ENCODE measurements at regions of chr2 and their contacts with region 1.

Region 1: GRCh38 chr2:135829378-135830135 is 7.4 kb downstream of the LCT start:
- DNase-seq: no peak
- H3K4me3 ChIP-seq: no peak overlapping the region
- H3K4me3 Mint-ChIP-seq: no peak overlapping the region
- H3K27ac Mint-ChIP-seq: no peak overlapping the region
- H3K4me1 ChIP-seq: peaks cover 39% of the 10 kb centered on the region
- H3K4me1 Mint-ChIP-seq: peaks cover 25% of the 10 kb centered on the region
- H3K27me3 ChIP-seq: no peaks in the 10 kb centered on the region
- H3K27me3 Mint-ChIP-seq: no peaks in the 10 kb centered on the region
- CTCF ChIP-seq: no peak

Region 2: GRCh38 chr2:134570676-134571075 is 1258.9 kb before region 1 on chr2:
- CTCF ChIA-PET with region 1: interaction called, 11 read pairs
- POLR2A ChIA-PET with region 1: no interaction called
- intact Hi-C with region 1: no loop called
- DNase-seq: no peak
- H3K4me3 ChIP-seq: no peak overlapping the region
- H3K4me3 Mint-ChIP-seq: no peak overlapping the region
- H3K27ac Mint-ChIP-seq: no peak overlapping the region
- H3K4me1 ChIP-seq: no peaks in the 10 kb centered on the region
- H3K4me1 Mint-ChIP-seq: no peaks in the 10 kb centered on the region
- H3K27me3 ChIP-seq: no peaks in the 10 kb centered on the region; the same call in 1 of the 2 replicates
- H3K27me3 Mint-ChIP-seq: peaks cover 10% of the 10 kb centered on the region
- CTCF ChIP-seq: no peak

Region 3: GRCh38 chr2:135709992-135710391 is 119.6 kb before region 1 on chr2:
- CTCF ChIA-PET with region 1: no interaction called
- POLR2A ChIA-PET with region 1: no interaction called
- intact Hi-C with region 1: no loop called
- DNase-seq: peak; percentile 54 to 75
- H3K4me3 ChIP-seq: no peak overlapping the region
- H3K4me3 Mint-ChIP-seq: no peak overlapping the region
- H3K27ac Mint-ChIP-seq: no peak overlapping the region
- H3K4me1 ChIP-seq: no peaks in the 10 kb centered on the region
- H3K4me1 Mint-ChIP-seq: no peaks in the 10 kb centered on the region
- H3K27me3 ChIP-seq: no peaks in the 10 kb centered on the region
- H3K27me3 Mint-ChIP-seq: no peaks in the 10 kb centered on the region
- CTCF ChIP-seq: peak; percentile 94 to 96

Region 4: GRCh38 chr2:135803278-135803677 is 26.3 kb before region 1 on chr2:
- CTCF ChIA-PET with region 1: no interaction called
- POLR2A ChIA-PET with region 1: no interaction called
- intact Hi-C with region 1: loop called (anchors 1 kb)
- DNase-seq: peak; percentile 54 to 58
- H3K4me3 ChIP-seq: no peak overlapping the region
- H3K4me3 Mint-ChIP-seq: no peak overlapping the region
- H3K27ac Mint-ChIP-seq: no peak overlapping the region
- H3K4me1 ChIP-seq: peaks cover 9% of the 10 kb centered on the region
- H3K4me1 Mint-ChIP-seq: no peaks in the 10 kb centered on the region
- H3K27me3 ChIP-seq: no peaks in the 10 kb centered on the region
- H3K27me3 Mint-ChIP-seq: no peaks in the 10 kb centered on the region
- CTCF ChIP-seq: no peak

Region 5: DNA sequence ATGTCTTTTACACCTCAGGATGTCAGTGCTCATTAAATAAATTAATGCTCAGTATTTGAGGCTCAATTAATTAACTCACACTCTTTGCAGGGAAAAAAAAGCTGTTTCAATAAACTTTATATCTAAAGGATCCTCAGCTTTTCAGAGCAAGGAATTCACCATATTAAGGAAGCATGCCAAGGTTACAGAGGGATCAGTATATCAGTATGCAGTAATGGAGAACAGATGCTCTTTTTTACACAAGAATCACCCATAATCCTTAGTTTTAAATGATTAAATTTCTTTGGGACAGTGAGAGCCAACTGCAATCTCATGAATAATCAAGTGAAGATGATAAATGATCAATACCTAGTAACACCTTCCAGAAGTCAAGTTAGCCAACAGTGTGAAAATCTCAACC is 22.3 kb after region 1 on chr2:
- CTCF ChIA-PET with region 1: no interaction called
- POLR2A ChIA-PET with region 1: no interaction called
- intact Hi-C with region 1: loop called (anchors 1 kb)
- DNase-seq: no peak
- H3K4me3 ChIP-seq: no peak overlapping the region
- H3K4me3 Mint-ChIP-seq: no peak overlapping the region
- H3K27ac Mint-ChIP-seq: peak overlapping the region; percentile 82
- H3K4me1 ChIP-seq: peaks cover 41% of the 10 kb centered on the region
- H3K4me1 Mint-ChIP-seq: peaks cover 27% of the 10 kb centered on the region
- H3K27me3 ChIP-seq: no peaks in the 10 kb centered on the region
- H3K27me3 Mint-ChIP-seq: no peaks in the 10 kb centered on the region
- CTCF ChIP-seq: no peak

Region 6: GRCh38 chr2:135870571-135870970 is 41.0 kb after region 1 on chr2:
- CTCF ChIA-PET with region 1: no interaction called
- POLR2A ChIA-PET with region 1: no interaction called
- intact Hi-C with region 1: no loop called
- DNase-seq: no peak
- H3K4me3 ChIP-seq: no peak overlapping the region
- H3K4me3 Mint-ChIP-seq: no peak overlapping the region
- H3K27ac Mint-ChIP-seq: no peak overlapping the region
- H3K4me1 ChIP-seq: peaks cover 23% of the 10 kb centered on the region
- H3K4me1 Mint-ChIP-seq: peaks cover 16% of the 10 kb centered on the region
- H3K27me3 ChIP-seq: no peaks in the 10 kb centered on the region
- H3K27me3 Mint-ChIP-seq: no peaks in the 10 kb centered on the region
- CTCF ChIP-seq: no peak